Activated naive CD4-positive, alpha-beta T cell treated with anti-CD3 and anti-CD28 coated beads for 36 hours (primary cell): ENCODE measurements at regions of chr13 and their contacts with region 1.

Region 1: GRCh38 chr13:91375116-91375729 is 23.2 kb upstream of the GPC5 start:
- DNase-seq: peak; percentile 31
- H3K4me3 Mint-ChIP-seq: no peak overlapping the region
- H3K27ac Mint-ChIP-seq: no peak overlapping the region
- H3K4me1 Mint-ChIP-seq: peaks cover 4% of the 10 kb centered on the region
- H3K27me3 Mint-ChIP-seq: peaks cover 5% of the 10 kb centered on the region

Region 2: DNA sequence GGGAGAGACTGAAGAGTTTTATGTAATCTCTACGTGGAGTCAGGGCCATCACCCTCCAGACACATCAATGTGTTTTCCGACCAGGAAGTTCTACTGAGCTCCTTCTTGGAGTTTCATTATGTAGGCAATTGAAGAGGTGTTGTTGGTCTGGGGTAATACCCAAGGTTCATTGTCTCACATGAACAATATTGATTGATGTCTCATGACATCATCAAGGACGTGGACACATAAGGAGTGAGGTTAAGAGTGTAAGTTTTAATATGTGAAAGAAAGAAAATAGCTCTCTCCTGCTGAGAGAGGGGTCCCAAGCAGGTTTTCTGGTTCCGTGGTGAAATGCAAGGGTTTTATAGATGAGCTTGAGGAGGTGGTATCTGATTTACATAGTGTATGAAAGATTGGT is 308.5 kb before region 1 on chr13:
- CTCF ChIA-PET with region 1: no interaction called
- intact Hi-C with region 1: no loop called
- DNase-seq: no peak
- H3K4me3 Mint-ChIP-seq: no peak overlapping the region
- H3K27ac Mint-ChIP-seq: no peak overlapping the region
- H3K4me1 Mint-ChIP-seq: no peaks in the 10 kb centered on the region
- H3K27me3 Mint-ChIP-seq: peaks cover under 1% of the 10 kb centered on the region

Region 3: GRCh38 chr13:91398413-91399272 is 23.4 kb after region 1 on chr13 and contains the start of gene GPC5:
- CTCF ChIA-PET with region 1: interaction called, 11 read pairs
- intact Hi-C with region 1: no loop called
- DNase-seq: peak; percentile 84
- H3K4me3 Mint-ChIP-seq: peak within 1 kb of the TSS; percentile 75
- H3K27ac Mint-ChIP-seq: no peak within 1 kb of the TSS
- H3K4me1 Mint-ChIP-seq: peaks cover 17% of the 10 kb centered on the region
- H3K27me3 Mint-ChIP-seq: peaks cover 52% of the 10 kb centered on the region
- total RNA-seq, gene GPC5: 0.38 to 0.40 TPM

Region 4: GRCh38 chr13:91406619-91407018 is 31.4 kb after region 1 on chr13:
- CTCF ChIA-PET with region 1: interaction called, 26 read pairs
- intact Hi-C with region 1: no loop called
- DNase-seq: peak; percentile 24
- H3K4me3 Mint-ChIP-seq: no peak overlapping the region
- H3K27ac Mint-ChIP-seq: no peak overlapping the region
- H3K4me1 Mint-ChIP-seq: no peaks in the 10 kb centered on the region
- H3K27me3 Mint-ChIP-seq: peaks cover 11% of the 10 kb centered on the region

Region 5: GRCh38 chr13:91459485-91459884 is 84.3 kb after region 1 on chr13:
- CTCF ChIA-PET with region 1: no interaction called
- intact Hi-C with region 1: loop called (anchors 2 kb)
- DNase-seq: no peak
- H3K4me3 Mint-ChIP-seq: no peak overlapping the region
- H3K27ac Mint-ChIP-seq: no peak overlapping the region
- H3K4me1 Mint-ChIP-seq: no peaks in the 10 kb centered on the region
- H3K27me3 Mint-ChIP-seq: peaks cover 10% of the 10 kb centered on the region

Region 6: DNA sequence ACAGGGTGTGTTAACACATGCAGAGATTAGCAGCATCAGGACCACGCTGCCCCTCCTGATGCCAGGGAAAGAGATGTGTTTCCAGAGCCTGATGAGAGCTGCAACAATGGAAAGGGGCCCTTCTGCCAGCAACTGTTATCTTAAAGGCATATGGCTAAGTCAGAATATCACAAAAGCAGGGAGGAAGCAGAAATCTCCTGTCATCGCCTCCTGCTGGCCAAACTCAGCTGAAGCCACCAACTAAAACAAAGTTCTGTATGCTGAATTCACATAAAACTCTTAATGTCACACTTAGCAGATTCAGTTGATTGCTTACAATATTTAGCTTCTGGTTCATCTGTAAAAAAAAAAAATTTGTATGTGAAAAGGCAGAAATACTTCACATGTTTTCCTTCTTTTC is 201.4 kb after region 1 on chr13:
- CTCF ChIA-PET with region 1: no interaction called
- intact Hi-C with region 1: loop called (anchors 5 kb)
- DNase-seq: no peak
- H3K4me3 Mint-ChIP-seq: no peak overlapping the region
- H3K27ac Mint-ChIP-seq: no peak overlapping the region
- H3K4me1 Mint-ChIP-seq: no peaks in the 10 kb centered on the region
- H3K27me3 Mint-ChIP-seq: no peaks in the 10 kb centered on the region

Region 7: DNA sequence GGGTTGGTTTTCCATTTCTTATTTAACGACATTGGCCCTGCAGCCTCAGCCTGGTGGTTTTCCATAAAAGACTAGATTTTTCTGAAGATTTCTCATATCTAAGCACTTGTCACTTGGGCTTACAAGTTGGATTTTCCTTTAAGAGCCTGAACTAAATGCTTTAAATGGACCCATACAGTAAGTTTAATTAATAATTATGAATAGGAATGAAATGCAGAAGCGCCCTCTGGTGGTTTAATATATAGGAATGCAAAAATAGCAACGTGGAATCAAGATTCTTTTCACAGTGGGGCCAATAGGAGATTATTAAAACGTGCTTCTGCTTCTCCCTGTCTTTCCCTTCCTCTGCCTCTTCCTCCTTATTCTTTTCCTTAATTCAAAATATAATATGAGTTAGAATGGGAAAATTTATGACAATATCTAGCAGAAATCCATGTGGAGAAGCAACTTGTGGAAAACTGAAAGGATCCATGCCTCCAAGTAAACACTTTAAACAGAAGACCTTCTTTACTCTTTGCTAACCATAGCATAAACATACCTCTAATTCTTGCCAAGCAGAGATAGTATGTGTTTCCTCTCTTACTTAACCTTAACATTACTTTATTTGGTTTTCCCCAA is 347.2 kb after region 1 on chr13:
- CTCF ChIA-PET with region 1: interaction called, 18 read pairs
- intact Hi-C with region 1: loop called (anchors 1 kb)
- DNase-seq: no peak
- H3K4me3 Mint-ChIP-seq: no peak overlapping the region
- H3K27ac Mint-ChIP-seq: no peak overlapping the region
- H3K4me1 Mint-ChIP-seq: no peaks in the 10 kb centered on the region
- H3K27me3 Mint-ChIP-seq: peaks cover 2% of the 10 kb centered on the region